Prostate gland (tissue), 2 donors: ENCODE measurements at regions of chr4 and their contacts with region 1.

Region 1: DNA sequence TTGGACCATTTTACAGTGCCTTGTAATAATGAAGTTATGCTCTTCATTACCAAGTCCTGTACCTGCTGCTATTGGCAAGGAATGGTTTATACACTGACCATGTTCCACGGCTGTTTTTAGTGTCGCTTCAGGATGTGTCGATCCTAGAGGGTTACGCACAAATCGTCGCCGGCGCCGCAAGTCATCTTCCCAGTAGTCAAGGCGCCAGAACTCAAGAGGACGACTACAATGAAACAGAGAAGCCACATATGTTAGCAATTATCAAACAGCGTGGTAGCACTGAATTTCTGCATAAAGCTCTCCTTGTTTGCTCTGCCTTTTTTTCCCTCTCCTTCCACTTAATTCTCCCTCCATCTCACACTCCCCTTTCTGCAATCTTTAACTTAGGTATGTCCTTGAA is 17.0 kb downstream of the MAB21L2 start:
- DNase-seq: no peak
- H3K4me3 ChIP-seq: no peak overlapping the region
- H3K27ac ChIP-seq: no peak overlapping the region
- H3K4me1 ChIP-seq: no peaks in the 10 kb centered on the region
- H3K27me3 ChIP-seq: no peaks in the 10 kb centered on the region
- CTCF ChIP-seq: no peak
- POLR2A ChIP-seq: no peak

Region 2: GRCh38 chr4:150297861-150298474 is 300.9 kb before region 1 on chr4:
- intact Hi-C with region 1: loop called (anchors 5 kb)
- DNase-seq: peak; percentile 25
- H3K4me3 ChIP-seq: no peak overlapping the region
- H3K27ac ChIP-seq: no peak overlapping the region
- H3K4me1 ChIP-seq: no peaks in the 10 kb centered on the region
- H3K27me3 ChIP-seq: no peaks in the 10 kb centered on the region
- CTCF ChIP-seq: peak; percentile 25 to 65 (median 57)
- POLR2A ChIP-seq: no peak